Sigmoid colon (tissue), 7 donors: ENCODE measurements at regions of chr18 and their contacts with region 1.

Region 1: GRCh38 chr18:12038639-12039417 is 54.8 kb upstream of the ANKRD62 start:
- DNase-seq: peak; percentile 91
- H3K4me3 ChIP-seq: peak overlapping the region; percentile 31 to 67 (median 52)
- H3K27ac ChIP-seq: peak overlapping the region in 3 of 4 donors; percentile 29 to 54 (median 35)
- H3K4me1 ChIP-seq: peaks cover 0 to 14% (median 9%) of the 10 kb centered on the region in 4 donors
- H3K27me3 ChIP-seq: no peaks in the 10 kb centered on the region
- CTCF ChIP-seq: peak; percentile 93 to 98 (median 96)
- EP300 ChIP-seq: no peak
- POLR2A ChIP-seq: no peak

Region 2: GRCh38 chr18:11733031-11733430 is 305.8 kb before region 1 on chr18:
- intact Hi-C with region 1: loop called (anchors 1 kb)
- DNase-seq: peak; percentile 88
- H3K4me3 ChIP-seq: peak overlapping the region in 3 of 4 donors; percentile 24 to 34 (median 26)
- H3K27ac ChIP-seq: no peak overlapping the region
- H3K4me1 ChIP-seq: peaks cover 0 to 7% (median 0%) of the 10 kb centered on the region in 4 donors
- H3K27me3 ChIP-seq: peaks cover 0 to 4% (median 0%) of the 10 kb centered on the region in 3 donors
- CTCF ChIP-seq: peak; percentile 41 to 91 (median 69)
- EP300 ChIP-seq: no peak
- POLR2A ChIP-seq: no peak

Region 3: DNA sequence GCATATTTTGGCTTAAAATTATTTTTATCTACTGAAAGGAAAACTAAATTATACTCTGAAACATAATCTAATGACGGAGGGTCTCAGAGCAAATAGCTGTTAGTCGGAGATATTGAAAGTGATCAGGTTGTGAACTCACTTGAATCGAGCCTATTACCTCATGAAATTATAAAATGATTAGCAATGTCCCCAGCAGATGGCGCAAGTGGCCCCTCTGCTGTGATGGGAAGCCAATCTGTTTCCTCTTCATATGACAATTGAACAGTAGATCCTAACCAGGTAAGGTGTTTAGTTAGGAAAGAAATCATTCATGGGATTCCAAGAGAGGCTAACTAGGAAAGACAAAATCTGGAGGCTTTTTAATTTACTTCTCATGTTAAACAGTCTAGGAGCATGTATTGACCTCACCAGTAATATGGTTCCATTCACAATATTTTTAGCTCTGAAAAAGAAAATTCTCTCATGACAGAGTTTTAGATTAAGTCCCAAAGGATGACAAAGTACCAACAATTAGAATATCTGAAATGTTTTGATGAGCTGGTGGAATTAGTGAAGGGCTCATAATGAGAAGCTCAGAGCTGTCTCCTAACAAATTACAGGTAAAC is 100.9 kb before region 1 on chr18:
- intact Hi-C with region 1: loop called (anchors 1 kb)
- DNase-seq: peak; percentile 84
- H3K4me3 ChIP-seq: no peak overlapping the region
- H3K27ac ChIP-seq: peak overlapping the region in 1 of 4 donors; percentile 45
- H3K4me1 ChIP-seq: no peaks in the 10 kb centered on the region
- H3K27me3 ChIP-seq: no peaks in the 10 kb centered on the region
- CTCF ChIP-seq: peak; percentile 58 to 82 (median 71)
- EP300 ChIP-seq: no peak
- POLR2A ChIP-seq: no peak

Region 4: GRCh38 chr18:11995445-11996189 is 43.2 kb before region 1 on chr18:
- intact Hi-C with region 1: loop called (anchors 2 kb)
- DNase-seq: peak; percentile 91
- H3K4me3 ChIP-seq: no peak overlapping the region
- H3K27ac ChIP-seq: peak overlapping the region; percentile 36 to 70 (median 48)
- H3K4me1 ChIP-seq: peaks cover 0 to 23% (median 12%) of the 10 kb centered on the region in 4 donors
- H3K27me3 ChIP-seq: no peaks in the 10 kb centered on the region
- CTCF ChIP-seq: peak; percentile 75 to 80 (median 76)
- EP300 ChIP-seq: no peak
- POLR2A ChIP-seq: no peak

Region 5: GRCh38 chr18:12015416-12016062 is 23.3 kb before region 1 on chr18:
- intact Hi-C with region 1: loop called (anchors 2 kb)
- DNase-seq: peak; percentile 90
- H3K4me3 ChIP-seq: no peak overlapping the region
- H3K27ac ChIP-seq: peak overlapping the region; percentile 67 to 81 (median 76)
- H3K4me1 ChIP-seq: peaks cover 0 to 25% (median 22%) of the 10 kb centered on the region in 4 donors
- H3K27me3 ChIP-seq: no peaks in the 10 kb centered on the region
- CTCF ChIP-seq: no peak
- EP300 ChIP-seq: no peak
- POLR2A ChIP-seq: no peak